A549 (cell line): ENCODE measurements at regions of chr7 and their contacts with region 1.

Region 1: GRCh38 chr7:123355576-123356195 is 155.9 kb upstream of the SLC13A1 start:
- DNase-seq: peak in 1 of 2 experiments; percentile 2
- ATAC-seq: peak; percentile 81 to 83; a peak in 5 of 6 replicates
- H3K4me3 ChIP-seq: no peak overlapping the region
- H3K27ac ChIP-seq: no peak overlapping the region
- H3K4me1 ChIP-seq: no peaks in the 10 kb centered on the region
- CTCF ChIP-seq: no peak
- EP300 ChIP-seq: no peak
- POLR2A ChIP-seq: no peak
- RAD21 ChIP-seq: no peak

Region 2: DNA sequence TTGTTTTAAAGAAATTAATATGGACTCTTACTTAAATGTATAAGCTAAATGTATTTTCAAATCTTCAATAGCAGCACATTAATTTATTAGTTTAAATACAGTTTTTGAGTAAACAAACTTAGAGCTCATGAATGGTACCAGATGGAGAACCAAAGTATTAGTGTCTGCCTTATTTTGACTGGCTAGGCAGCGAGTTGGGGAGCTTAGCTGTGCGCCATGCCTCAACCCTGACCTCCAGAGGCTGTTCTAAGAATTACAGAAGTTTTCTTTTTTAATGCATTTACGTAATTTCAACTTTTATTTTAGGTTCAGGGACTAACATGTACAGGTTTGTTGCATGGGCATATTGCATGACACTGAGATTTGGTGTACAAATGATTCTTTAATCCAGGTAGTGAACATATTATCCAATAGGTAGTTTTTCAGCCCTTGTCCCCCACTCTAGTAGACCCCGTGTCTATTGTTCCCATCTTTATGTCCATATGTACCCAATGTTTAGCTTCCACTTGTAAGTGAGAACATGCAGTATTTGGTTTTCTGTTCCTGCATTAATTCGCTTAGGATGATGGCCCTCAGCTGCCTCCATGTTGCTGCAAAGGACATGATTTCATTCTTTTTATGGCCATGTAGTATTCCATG is 11.9 kb after region 1 on chr7:
- CTCF ChIA-PET with region 1: interaction called, 18 read pairs
- POLR2A ChIA-PET with region 1: no interaction called
- DNase-seq: peak; percentile 15 to 46
- ATAC-seq: peak; percentile 56 to 81; a peak in 4 of 6 replicates
- H3K4me3 ChIP-seq: no peak overlapping the region
- H3K27ac ChIP-seq: no peak overlapping the region
- H3K4me1 ChIP-seq: no peaks in the 10 kb centered on the region
- CTCF ChIP-seq: peak; percentile 57
- EP300 ChIP-seq: no peak
- POLR2A ChIP-seq: no peak
- RAD21 ChIP-seq: peak; percentile 58 to 73